ENCODE measurements at regions of chr3 and their contacts with region 1.

Region 1: GRCh38 chr3:114418724-114419543 is 125.1 kb downstream of the TIGIT start:
- DNase-seq: peak; percentile 78
- ATAC-seq: peak; percentile 91
- H3K4me3 ChIP-seq: no peak overlapping the region
- H3K4me3 Mint-ChIP-seq: no peak overlapping the region
- H3K27ac ChIP-seq: no peak overlapping the region
- H3K27ac Mint-ChIP-seq: no peak overlapping the region
- H3K4me1 ChIP-seq: peaks cover 0 to 6% of the 10 kb centered on the region in 2 donors
- H3K4me1 Mint-ChIP-seq: peaks cover 32% of the 10 kb centered on the region
- H3K27me3 ChIP-seq: no peaks in the 10 kb centered on the region
- H3K27me3 Mint-ChIP-seq: no peaks in the 10 kb centered on the region
- CTCF ChIP-seq: peak; percentile 85

Region 2: DNA sequence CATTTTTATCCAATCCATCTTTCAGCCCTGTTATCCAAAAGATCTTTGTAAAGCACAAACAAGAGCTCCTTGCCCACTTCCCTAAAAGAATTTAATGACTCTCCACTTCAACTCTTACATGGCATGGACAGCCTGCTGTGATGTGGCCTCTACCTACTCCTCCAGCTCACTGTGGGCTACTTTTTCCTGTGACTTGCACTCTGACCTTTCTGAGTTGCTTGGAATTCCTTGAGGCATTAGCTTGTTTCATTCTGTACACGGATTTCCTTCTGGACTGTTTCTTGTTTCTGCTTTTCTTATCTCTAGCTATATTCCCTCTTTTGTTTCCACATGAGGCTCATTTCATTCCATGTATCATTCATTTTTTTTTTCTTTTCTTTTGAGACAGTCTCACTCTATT is 347.1 kb before region 1 on chr3:
- CTCF ChIA-PET with region 1: no interaction called
- POLR2A ChIA-PET with region 1: no interaction called
- intact Hi-C with region 1: no loop called
- DNase-seq: no peak
- ATAC-seq: no peak
- H3K4me3 ChIP-seq: no peak overlapping the region
- H3K4me3 Mint-ChIP-seq: no peak overlapping the region
- H3K27ac ChIP-seq: no peak overlapping the region
- H3K27ac Mint-ChIP-seq: no peak overlapping the region
- H3K4me1 ChIP-seq: no peaks in the 10 kb centered on the region
- H3K4me1 Mint-ChIP-seq: no peaks in the 10 kb centered on the region
- H3K27me3 ChIP-seq: no peaks in the 10 kb centered on the region
- H3K27me3 Mint-ChIP-seq: no peaks in the 10 kb centered on the region
- CTCF ChIP-seq: no peak

Region 3: GRCh38 chr3:114152519-114153151 is 266.3 kb before region 1 on chr3:
- CTCF ChIA-PET with region 1: interaction called, 110 read pairs
- POLR2A ChIA-PET with region 1: no interaction called
- intact Hi-C with region 1: loop called (anchors 1 kb)
- DNase-seq: peak; percentile 88
- ATAC-seq: peak; percentile 99
- H3K4me3 ChIP-seq: peak overlapping the region; percentile 15 to 61 (median 48)
- H3K4me3 Mint-ChIP-seq: peak overlapping the region; percentile 72
- H3K27ac ChIP-seq: no peak overlapping the region
- H3K27ac Mint-ChIP-seq: peak overlapping the region; percentile 47
- H3K4me1 ChIP-seq: peaks cover 3 to 7% of the 10 kb centered on the region in 2 donors
- H3K4me1 Mint-ChIP-seq: peaks cover 9% of the 10 kb centered on the region
- H3K27me3 ChIP-seq: no peaks in the 10 kb centered on the region
- H3K27me3 Mint-ChIP-seq: no peaks in the 10 kb centered on the region
- CTCF ChIP-seq: peak; percentile 98

Region 4: DNA sequence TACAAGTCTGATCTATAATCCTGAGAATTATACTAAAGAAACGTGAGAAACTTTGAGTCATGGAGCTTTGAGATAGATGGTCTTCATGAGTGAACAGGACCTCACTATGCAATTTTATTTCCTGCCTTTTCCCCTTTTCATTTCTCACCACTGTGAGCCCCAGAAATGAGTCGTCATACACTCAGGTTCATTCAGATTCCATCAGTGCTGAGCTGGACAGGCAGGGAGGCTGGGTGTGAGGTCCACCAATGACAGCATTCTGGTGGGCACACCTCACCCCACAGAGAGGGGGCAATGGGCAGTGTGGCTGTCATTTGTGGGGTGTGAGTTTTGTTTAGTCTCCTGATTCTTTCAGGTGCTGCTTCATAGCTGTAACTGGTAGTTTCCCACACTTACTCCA is 108.2 kb before region 1 on chr3:
- CTCF ChIA-PET with region 1: no interaction called
- POLR2A ChIA-PET with region 1: no interaction called
- intact Hi-C with region 1: no loop called
- DNase-seq: no peak
- ATAC-seq: no peak
- H3K4me3 ChIP-seq: no peak overlapping the region
- H3K4me3 Mint-ChIP-seq: no peak overlapping the region
- H3K27ac ChIP-seq: no peak overlapping the region
- H3K27ac Mint-ChIP-seq: peak overlapping the region; percentile 22
- H3K4me1 ChIP-seq: peaks cover 22 to 27% of the 10 kb centered on the region in 2 donors
- H3K4me1 Mint-ChIP-seq: peaks cover 34% of the 10 kb centered on the region
- H3K27me3 ChIP-seq: no peaks in the 10 kb centered on the region
- H3K27me3 Mint-ChIP-seq: no peaks in the 10 kb centered on the region
- CTCF ChIP-seq: no peak

Region 5: GRCh38 chr3:114362815-114363214 is 56.1 kb before region 1 on chr3:
- CTCF ChIA-PET with region 1: interaction called, 17 read pairs
- POLR2A ChIA-PET with region 1: no interaction called
- intact Hi-C with region 1: no loop called
- DNase-seq: peak; percentile 13
- ATAC-seq: no peak
- H3K4me3 ChIP-seq: no peak overlapping the region
- H3K4me3 Mint-ChIP-seq: no peak overlapping the region
- H3K27ac ChIP-seq: no peak overlapping the region
- H3K27ac Mint-ChIP-seq: no peak overlapping the region
- H3K4me1 ChIP-seq: no peaks in the 10 kb centered on the region
- H3K4me1 Mint-ChIP-seq: no peaks in the 10 kb centered on the region
- H3K27me3 ChIP-seq: no peaks in the 10 kb centered on the region
- H3K27me3 Mint-ChIP-seq: no peaks in the 10 kb centered on the region
- CTCF ChIP-seq: peak; percentile 51

Region 6: GRCh38 chr3:114400371-114400770 is 18.6 kb before region 1 on chr3:
- CTCF ChIA-PET with region 1: interaction called, 36 read pairs
- POLR2A ChIA-PET with region 1: no interaction called
- intact Hi-C with region 1: no loop called
- DNase-seq: no peak
- ATAC-seq: no peak
- H3K4me3 ChIP-seq: no peak overlapping the region
- H3K4me3 Mint-ChIP-seq: no peak overlapping the region
- H3K27ac ChIP-seq: no peak overlapping the region
- H3K27ac Mint-ChIP-seq: no peak overlapping the region
- H3K4me1 ChIP-seq: peaks cover 3 to 4% of the 10 kb centered on the region in 2 donors
- H3K4me1 Mint-ChIP-seq: peaks cover 8% of the 10 kb centered on the region
- H3K27me3 ChIP-seq: no peaks in the 10 kb centered on the region
- H3K27me3 Mint-ChIP-seq: no peaks in the 10 kb centered on the region
- CTCF ChIP-seq: no peak

Region 7: DNA sequence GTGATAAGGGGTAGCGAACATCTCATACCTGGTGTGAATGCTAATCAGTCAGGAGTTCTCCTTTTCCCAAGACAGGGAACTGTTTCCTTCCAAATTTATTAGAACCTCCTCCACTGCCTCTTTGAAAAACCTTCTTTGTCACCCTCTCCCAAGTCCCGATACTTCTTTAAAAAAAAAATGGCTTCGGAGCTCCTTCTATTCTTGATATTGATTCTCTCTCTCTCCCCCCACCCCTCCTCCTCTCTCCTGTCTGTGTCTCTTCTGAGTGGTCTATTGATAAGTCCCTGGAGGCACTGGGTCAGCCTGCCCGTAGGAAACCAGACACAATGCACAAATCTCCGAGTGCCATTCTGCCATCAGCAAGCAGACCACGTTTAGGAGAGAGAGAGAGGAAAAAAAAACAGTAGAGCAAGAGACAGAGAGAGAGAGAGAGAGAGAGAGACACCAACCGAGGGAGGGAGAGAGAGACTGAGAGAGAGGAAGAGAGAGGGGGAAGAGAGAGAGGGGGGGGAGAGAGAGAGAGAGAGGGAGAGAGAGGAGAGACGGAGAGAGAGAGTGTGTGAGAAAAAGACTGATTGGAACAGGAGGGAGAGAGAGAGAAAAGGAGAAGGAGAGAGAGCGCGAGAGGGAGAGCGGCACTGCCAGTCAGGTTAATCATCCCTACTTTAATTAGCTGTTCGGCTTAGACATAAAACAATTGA is 35.8 kb after region 1 on chr3:
- CTCF ChIA-PET with region 1: interaction called, 203 read pairs
- POLR2A ChIA-PET with region 1: interaction called, 4 read pairs
- intact Hi-C with region 1: loop called (anchors 5 kb)
- DNase-seq: peak; percentile 67
- ATAC-seq: peak; percentile 14
- H3K4me3 ChIP-seq: peak overlapping the region; percentile 11 to 71 (median 53)
- H3K4me3 Mint-ChIP-seq: no peak overlapping the region
- H3K27ac ChIP-seq: peak overlapping the region; percentile 79 to 92
- H3K27ac Mint-ChIP-seq: no peak overlapping the region
- H3K4me1 ChIP-seq: peaks cover 47 to 55% of the 10 kb centered on the region in 2 donors
- H3K4me1 Mint-ChIP-seq: peaks cover 40% of the 10 kb centered on the region
- H3K27me3 ChIP-seq: no peaks in the 10 kb centered on the region
- H3K27me3 Mint-ChIP-seq: no peaks in the 10 kb centered on the region
- CTCF ChIP-seq: no peak

Region 8: DNA sequence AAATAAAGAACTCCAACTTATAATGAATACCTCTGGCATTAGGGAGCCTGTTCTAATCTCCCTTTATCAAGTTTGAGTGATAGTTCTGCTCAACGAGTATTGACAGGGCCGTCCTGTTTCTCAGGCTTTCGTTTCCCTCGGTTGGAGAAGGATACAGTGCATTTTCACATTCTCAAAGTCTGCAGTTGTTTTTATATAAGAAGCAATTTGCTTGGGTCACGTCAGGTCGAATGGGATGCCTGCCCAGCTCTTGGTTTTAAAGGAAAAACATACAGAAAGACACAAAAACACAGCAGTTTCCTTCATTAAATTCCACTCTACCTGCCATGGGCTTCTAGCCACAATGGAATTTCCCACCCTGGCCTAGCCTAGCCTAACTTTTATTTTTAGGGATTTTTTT is 241.2 kb after region 1 on chr3:
- CTCF ChIA-PET with region 1: no interaction called
- POLR2A ChIA-PET with region 1: no interaction called
- intact Hi-C with region 1: no loop called
- DNase-seq: no peak
- ATAC-seq: no peak
- H3K4me3 ChIP-seq: no peak overlapping the region
- H3K4me3 Mint-ChIP-seq: no peak overlapping the region
- H3K27ac ChIP-seq: no peak overlapping the region
- H3K27ac Mint-ChIP-seq: no peak overlapping the region
- H3K4me1 ChIP-seq: peaks cover 0 to 8% of the 10 kb centered on the region in 2 donors
- H3K4me1 Mint-ChIP-seq: peaks cover 13% of the 10 kb centered on the region
- H3K27me3 ChIP-seq: no peaks in the 10 kb centered on the region
- H3K27me3 Mint-ChIP-seq: no peaks in the 10 kb centered on the region
- CTCF ChIP-seq: no peak

Region 9: GRCh38 chr3:115652738-115653137 is 1233.8 kb after region 1 on chr3:
- CTCF ChIA-PET with region 1: no interaction called
- POLR2A ChIA-PET with region 1: no interaction called
- intact Hi-C with region 1: no loop called
- DNase-seq: peak; percentile 56
- ATAC-seq: peak; percentile 70
- H3K4me3 ChIP-seq: no peak overlapping the region
- H3K4me3 Mint-ChIP-seq: peak overlapping the region; percentile 54
- H3K27ac ChIP-seq: no peak overlapping the region
- H3K27ac Mint-ChIP-seq: peak overlapping the region; percentile 64
- H3K4me1 ChIP-seq: peaks cover 18 to 37% of the 10 kb centered on the region in 2 donors
- H3K4me1 Mint-ChIP-seq: peaks cover 30% of the 10 kb centered on the region
- H3K27me3 ChIP-seq: no peaks in the 10 kb centered on the region
- H3K27me3 Mint-ChIP-seq: no peaks in the 10 kb centered on the region
- CTCF ChIP-seq: no peak

Measured in B cell (primary cell).